CD4-positive, alpha-beta memory T cell (primary cell): ENCODE measurements at regions of chr2 and their contacts with region 1.

Region 1: DNA sequence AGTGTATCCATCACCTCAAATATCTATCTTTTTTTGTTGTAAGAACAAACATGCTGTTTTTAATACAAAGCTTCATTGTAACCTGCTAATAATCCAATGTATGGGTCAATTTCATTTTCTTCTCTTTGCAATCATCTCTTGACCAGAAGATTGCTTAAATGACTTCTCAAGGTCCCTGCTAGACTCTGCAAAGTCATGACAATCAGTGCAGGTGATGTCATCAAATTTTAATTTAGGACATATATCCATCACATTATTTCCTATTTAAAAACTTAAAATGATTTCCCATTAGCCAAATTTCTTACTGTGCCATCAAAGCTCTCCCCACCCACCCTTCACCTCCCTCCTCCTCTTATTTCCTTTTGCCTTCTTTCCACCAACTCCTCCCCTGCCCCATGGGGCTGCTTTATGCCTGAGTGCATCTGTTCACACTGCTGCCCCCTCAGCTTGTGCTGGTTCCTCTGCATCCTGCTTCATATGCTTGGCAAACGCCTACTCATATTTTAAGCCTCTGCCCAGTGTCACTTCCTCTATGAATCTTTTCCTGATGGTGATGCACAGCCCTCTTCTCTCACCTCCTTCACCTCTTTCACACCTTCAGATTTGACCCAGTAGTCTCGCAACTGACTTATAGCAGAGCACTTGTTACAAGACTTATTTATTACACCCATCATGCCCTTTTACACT is 20.3 kb downstream of the PLEK start:
- DNase-seq: peak in 1 of 5 donors; percentile 49
- H3K4me3 ChIP-seq: no peak overlapping the region
- H3K4me3 Mint-ChIP-seq: peak overlapping the region in 2 of 8 donors; percentile 68 to 76
- H3K27ac ChIP-seq: no peak overlapping the region
- H3K27ac Mint-ChIP-seq: peak overlapping the region in 4 of 7 donors; percentile 7 to 85 (median 36)
- H3K4me1 ChIP-seq: peaks cover 63% of the 10 kb centered on the region
- H3K4me1 Mint-ChIP-seq: peaks cover 27 to 64% (median 53%) of the 10 kb centered on the region in 4 donors
- H3K27me3 ChIP-seq: no peaks in the 10 kb centered on the region
- H3K27me3 Mint-ChIP-seq: no peaks in the 10 kb centered on the region

Region 2: GRCh38 chr2:68368654-68369336 is 16.6 kb before region 1 on chr2:
- CTCF ChIA-PET with region 1: no interaction called
- POLR2A ChIA-PET with region 1: no interaction called
- intact Hi-C with region 1: no loop called
- DNase-seq: no peak
- H3K4me3 ChIP-seq: no peak overlapping the region
- H3K4me3 Mint-ChIP-seq: peak overlapping the region in 4 of 8 donors; percentile 9 to 55 (median 26)
- H3K27ac ChIP-seq: no peak overlapping the region
- H3K27ac Mint-ChIP-seq: peak overlapping the region in 3 of 7 donors; percentile 25 to 74 (median 53)
- H3K4me1 ChIP-seq: peaks cover 24% of the 10 kb centered on the region
- H3K4me1 Mint-ChIP-seq: peaks cover 7 to 65% (median 34%) of the 10 kb centered on the region in 4 donors
- H3K27me3 ChIP-seq: no peaks in the 10 kb centered on the region
- H3K27me3 Mint-ChIP-seq: no peaks in the 10 kb centered on the region

Region 3: GRCh38 chr2:68418855-68419254 is 33.5 kb after region 1 on chr2:
- CTCF ChIA-PET with region 1: no interaction called
- POLR2A ChIA-PET with region 1: no interaction called
- intact Hi-C with region 1: loop called (anchors 1 kb)
- DNase-seq: no peak
- H3K4me3 ChIP-seq: no peak overlapping the region
- H3K4me3 Mint-ChIP-seq: no peak overlapping the region
- H3K27ac ChIP-seq: no peak overlapping the region
- H3K27ac Mint-ChIP-seq: no peak overlapping the region
- H3K4me1 ChIP-seq: peaks cover 30% of the 10 kb centered on the region
- H3K4me1 Mint-ChIP-seq: peaks cover 3 to 42% (median 30%) of the 10 kb centered on the region in 4 donors
- H3K27me3 ChIP-seq: no peaks in the 10 kb centered on the region
- H3K27me3 Mint-ChIP-seq: no peaks in the 10 kb centered on the region